WTC11 (cell line): ENCODE measurements at regions of chr17 and their contacts with region 1.

Region 1: GRCh38 chr17:4565209-4566141 is 5.1 kb upstream of the GGT6 start:
- DNase-seq: peak; percentile 68
- ATAC-seq: peak; percentile 76
- H3K4me3 Mint-ChIP-seq: no peak overlapping the region
- H3K27ac Mint-ChIP-seq: peak overlapping the region; percentile 54; the same call in 1 of the 2 replicates
- H3K4me1 Mint-ChIP-seq: peaks cover 34% of the 10 kb centered on the region
- H3K27me3 Mint-ChIP-seq: peaks cover 7% of the 10 kb centered on the region
- CTCF ChIP-seq: peak; percentile 55

Region 2: DNA sequence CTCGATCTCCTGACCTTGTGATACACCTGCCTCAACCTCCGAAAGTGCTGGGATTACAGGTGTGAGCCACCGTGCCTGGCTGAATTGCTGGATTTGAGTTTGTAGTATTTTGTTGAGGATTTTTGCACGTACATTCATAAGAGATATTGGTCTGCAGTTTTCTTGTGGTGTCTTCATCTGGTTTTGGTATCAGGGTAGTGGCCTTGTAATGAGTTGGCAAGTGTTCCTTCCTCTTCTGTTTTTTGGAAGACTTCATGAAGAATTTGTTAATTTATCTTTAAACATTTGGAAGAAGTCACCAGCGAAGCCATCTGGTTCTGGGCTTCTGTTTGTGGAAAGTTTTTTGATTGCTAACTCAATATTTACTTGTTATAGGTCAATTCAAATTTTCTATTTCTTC is 104.8 kb before region 1 on chr17:
- CTCF ChIA-PET with region 1: no interaction called
- POLR2A ChIA-PET with region 1: no interaction called
- DNase-seq: no peak
- ATAC-seq: no peak
- H3K4me3 Mint-ChIP-seq: no peak overlapping the region
- H3K27ac Mint-ChIP-seq: no peak overlapping the region
- H3K4me1 Mint-ChIP-seq: no peaks in the 10 kb centered on the region
- H3K27me3 Mint-ChIP-seq: peaks cover 8% of the 10 kb centered on the region; the same call in 1 of the 2 replicates
- CTCF ChIP-seq: no peak

Region 3: DNA sequence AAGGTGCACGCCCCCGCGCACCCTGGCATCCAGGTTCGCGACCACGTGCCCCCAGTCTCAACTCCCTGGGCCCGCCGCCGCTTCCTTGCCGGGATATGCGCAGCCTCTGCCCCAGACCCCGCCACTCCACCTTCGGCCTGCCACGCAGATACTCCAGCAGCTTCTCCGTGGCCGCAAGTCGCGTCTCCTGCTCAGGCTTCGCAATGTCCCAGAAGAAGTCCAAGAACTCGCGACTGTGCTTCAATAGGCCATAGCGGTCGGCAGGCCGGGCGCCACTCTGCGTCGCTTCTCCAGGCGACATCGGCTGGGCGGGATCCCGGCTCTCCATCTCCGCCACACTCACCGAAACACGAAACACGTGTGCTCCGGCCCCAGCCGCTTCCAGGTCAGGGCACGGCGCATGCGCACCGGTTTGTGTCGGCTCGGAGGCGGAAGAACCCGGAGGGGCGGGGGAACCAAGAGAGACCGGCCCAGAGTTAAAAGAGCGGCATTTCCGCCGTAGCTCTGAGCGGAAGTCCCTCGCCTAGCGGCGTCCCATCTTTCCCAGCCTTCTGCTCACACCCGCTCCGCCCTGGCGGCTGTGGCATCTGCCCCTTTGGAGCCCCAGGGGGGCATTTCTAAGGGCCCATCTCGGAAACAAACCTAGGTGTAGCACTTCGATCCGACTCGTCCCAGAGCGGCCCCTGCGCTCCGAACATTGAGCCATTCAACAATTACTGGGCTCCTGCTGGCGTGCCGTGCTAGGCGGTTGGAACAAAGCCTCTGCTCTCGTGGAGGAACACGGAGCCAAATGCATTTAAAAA is 10.3 kb before region 1 on chr17 and contains the start of gene MYBBP1A:
- CTCF ChIA-PET with region 1: interaction called, 22 read pairs
- POLR2A ChIA-PET with region 1: no interaction called
- DNase-seq: peak; percentile 94
- ATAC-seq: peak; percentile 90
- H3K4me3 Mint-ChIP-seq: peak within 1 kb of the TSS; percentile 78
- H3K27ac Mint-ChIP-seq: peak within 1 kb of the TSS; percentile 95
- H3K4me1 Mint-ChIP-seq: peaks cover 32% of the 10 kb centered on the region
- H3K27me3 Mint-ChIP-seq: peaks cover 2% of the 10 kb centered on the region; the same call in 1 of the 2 replicates
- CTCF ChIP-seq: no peak
- total RNA-seq, gene MYBBP1A: 108 to 163 TPM (median 118 TPM) in 3 replicates

Region 4: DNA sequence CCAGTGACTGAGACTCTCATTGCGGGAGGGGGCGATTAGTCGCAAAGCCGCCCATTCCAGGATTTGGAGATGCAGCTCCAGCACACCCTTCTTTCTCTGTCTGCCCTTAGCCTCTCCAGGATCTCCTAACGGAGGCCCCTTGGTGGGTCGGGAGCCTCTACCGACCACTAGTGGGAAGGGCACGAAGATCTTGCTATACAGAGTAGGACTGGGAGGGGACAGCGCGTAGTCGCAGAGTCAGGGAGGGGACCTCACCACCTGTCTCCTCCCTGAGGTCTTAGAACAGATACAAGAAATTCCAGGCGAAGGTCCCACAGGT is 18.3 kb after region 1 on chr17:
- CTCF ChIA-PET with region 1: interaction called, 35 read pairs
- POLR2A ChIA-PET with region 1: interaction called, 3 read pairs
- DNase-seq: peak; percentile 60
- ATAC-seq: peak; percentile 76
- H3K4me3 Mint-ChIP-seq: peak overlapping the region; percentile 86
- H3K27ac Mint-ChIP-seq: no peak overlapping the region
- H3K4me1 Mint-ChIP-seq: peaks cover 22% of the 10 kb centered on the region
- H3K27me3 Mint-ChIP-seq: peaks cover 40% of the 10 kb centered on the region
- CTCF ChIP-seq: peak; percentile 24; the same call in 1 of the 2 replicates

Region 5: GRCh38 chr17:4607773-4608187 is 42.3 kb after region 1 on chr17:
- CTCF ChIA-PET with region 1: interaction called, 11 read pairs
- POLR2A ChIA-PET with region 1: no interaction called
- DNase-seq: no peak
- ATAC-seq: peak; percentile 44; the same call in 1 of the 2 replicates
- H3K4me3 Mint-ChIP-seq: no peak overlapping the region
- H3K27ac Mint-ChIP-seq: peak overlapping the region; percentile 48; the same call in 1 of the 2 replicates
- H3K4me1 Mint-ChIP-seq: peaks cover 11% of the 10 kb centered on the region
- H3K27me3 Mint-ChIP-seq: no peaks in the 10 kb centered on the region
- CTCF ChIP-seq: no peak

Region 6: DNA sequence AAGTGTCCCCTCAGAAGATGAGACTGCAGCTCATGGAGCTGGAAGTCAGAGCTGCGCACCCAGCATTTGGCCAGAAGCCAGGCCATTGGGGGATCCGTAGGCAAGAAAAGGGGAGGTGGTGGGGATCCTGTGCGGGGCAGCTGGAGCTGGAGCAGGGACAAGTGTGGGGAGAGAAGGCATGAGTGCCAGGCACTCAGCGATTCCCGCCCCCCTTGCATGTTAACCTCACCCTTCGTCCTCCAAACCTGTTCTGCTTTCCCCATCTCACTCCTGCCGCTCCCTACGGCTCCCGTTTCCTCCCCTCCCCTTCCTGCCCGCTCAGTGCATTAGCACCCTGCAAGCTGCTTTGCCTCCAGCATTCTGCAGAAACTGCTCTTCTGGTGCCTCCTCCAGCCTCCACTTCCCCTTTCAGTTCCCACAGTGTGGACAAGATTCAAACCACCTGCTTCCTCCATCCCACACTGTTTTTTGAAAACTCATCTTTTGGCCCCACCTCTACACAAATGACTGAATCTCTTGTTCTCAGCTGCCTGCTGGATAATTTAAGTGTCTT is 70.4 kb after region 1 on chr17:
- CTCF ChIA-PET with region 1: interaction called, 15 read pairs
- POLR2A ChIA-PET with region 1: no interaction called
- DNase-seq: no peak
- ATAC-seq: peak; percentile 6; the same call in 1 of the 2 replicates
- H3K4me3 Mint-ChIP-seq: peak overlapping the region; percentile 26
- H3K27ac Mint-ChIP-seq: no peak overlapping the region
- H3K4me1 Mint-ChIP-seq: peaks cover 47% of the 10 kb centered on the region
- H3K27me3 Mint-ChIP-seq: peaks cover 56% of the 10 kb centered on the region
- CTCF ChIP-seq: no peak